ENCODE measurements at regions of chr20 and their contacts with region 1.

Region 1: DNA sequence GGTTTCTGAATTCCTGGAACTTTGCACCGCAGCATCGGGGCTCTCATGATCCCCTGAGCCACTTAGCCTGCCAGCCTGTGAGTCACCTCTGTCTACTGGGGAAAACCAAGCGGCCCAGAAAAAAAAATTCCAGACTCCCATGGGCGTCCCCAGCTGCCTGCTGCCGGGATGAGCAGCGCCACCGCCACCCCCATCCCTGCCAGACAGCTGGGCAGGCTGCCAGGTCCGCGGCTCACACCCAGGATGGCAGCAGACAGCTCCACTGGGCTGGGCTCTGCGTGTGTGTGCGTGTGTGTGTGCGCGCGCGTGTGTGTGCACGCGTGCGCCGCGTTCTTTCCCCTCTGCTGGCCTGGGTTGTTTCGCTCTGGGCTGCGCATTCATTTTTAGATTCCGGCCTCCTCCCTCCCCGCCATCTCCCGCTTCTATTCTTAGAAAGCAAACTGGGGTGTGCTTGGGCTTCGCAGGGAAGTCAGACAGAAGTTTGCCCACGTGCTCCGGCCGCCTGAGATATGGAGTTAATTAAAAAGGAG is 38.9 kb upstream of the PMEPA1 start:
- DNase-seq: peak; percentile 88 to 96 (median 94)
- ATAC-seq: peak; percentile 88 to 89
- H3K4me3 ChIP-seq: no peak overlapping the region
- H3K27ac ChIP-seq: peak overlapping the region; percentile 75
- H3K4me1 ChIP-seq: peaks cover 8% of the 10 kb centered on the region
- H3K27me3 ChIP-seq: no peaks in the 10 kb centered on the region

Region 2: DNA sequence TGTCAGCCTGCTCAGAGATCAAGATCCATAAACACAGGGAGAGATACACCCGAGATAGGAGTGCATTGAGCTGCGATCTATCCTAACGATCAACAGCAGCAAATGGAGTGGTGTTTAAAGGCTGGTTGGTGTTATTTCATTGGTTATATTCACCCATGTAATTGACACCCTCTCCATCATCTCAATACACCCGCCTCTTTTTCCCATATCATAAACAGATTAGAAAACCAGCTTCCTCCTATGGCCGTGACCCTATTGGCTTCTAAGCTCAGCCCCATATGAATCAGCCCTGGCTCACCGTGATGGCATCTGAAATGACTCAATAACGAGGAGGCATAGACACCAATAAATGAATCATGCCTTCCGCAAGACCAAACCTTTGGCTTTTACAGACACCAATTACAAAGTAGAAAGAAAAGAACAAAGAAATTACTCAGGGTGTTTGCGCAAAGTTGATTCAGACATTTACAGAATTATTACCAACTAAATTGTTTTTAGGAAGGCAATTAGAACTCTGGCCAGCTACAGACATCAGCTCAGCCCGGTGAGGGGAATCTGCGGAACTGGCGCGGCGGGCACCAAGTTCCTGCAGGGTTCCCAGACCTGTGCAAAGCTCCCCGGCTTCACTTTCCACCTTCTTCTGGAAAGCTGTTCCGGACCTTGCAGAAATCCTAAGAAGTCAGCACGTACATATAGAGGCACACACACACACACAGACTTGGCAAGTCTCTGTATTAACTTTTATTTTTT is 50.4 kb before region 1 on chr20:
- intact Hi-C with region 1: loop called in 1 of 4 experiments (anchors 10 kb)
- DNase-seq: no peak
- ATAC-seq: no peak
- H3K4me3 ChIP-seq: no peak overlapping the region
- H3K27ac ChIP-seq: no peak overlapping the region
- H3K4me1 ChIP-seq: no peaks in the 10 kb centered on the region
- H3K27me3 ChIP-seq: no peaks in the 10 kb centered on the region